CD8-positive, alpha-beta T cell (primary cell): ENCODE measurements at regions of chr1 and their contacts with region 1.

Region 1: GRCh38 chr1:13451399-13451965 is 41.2 kb downstream of the PRAMEF20 start:
- DNase-seq: no peak
- ATAC-seq: no peak
- H3K4me3 ChIP-seq: no peak overlapping the region
- H3K4me3 Mint-ChIP-seq: no peak overlapping the region
- H3K27ac ChIP-seq: no peak overlapping the region
- H3K27ac Mint-ChIP-seq: no peak overlapping the region
- H3K4me1 ChIP-seq: no peaks in the 10 kb centered on the region
- H3K4me1 Mint-ChIP-seq: no peaks in the 10 kb centered on the region
- H3K27me3 ChIP-seq: no peaks in the 10 kb centered on the region
- H3K27me3 Mint-ChIP-seq: peaks cover 9% of the 10 kb centered on the region
- CTCF ChIP-seq: no peak

Region 2: GRCh38 chr1:13461977-13462376 is 10.5 kb after region 1 on chr1:
- CTCF ChIA-PET with region 1: no interaction called
- POLR2A ChIA-PET with region 1: no interaction called
- intact Hi-C with region 1: loop called in 1 of 2 experiments (anchors 1 kb)
- DNase-seq: no peak
- ATAC-seq: no peak
- H3K4me3 ChIP-seq: no peak overlapping the region
- H3K4me3 Mint-ChIP-seq: no peak overlapping the region
- H3K27ac ChIP-seq: no peak overlapping the region
- H3K27ac Mint-ChIP-seq: no peak overlapping the region
- H3K4me1 ChIP-seq: no peaks in the 10 kb centered on the region
- H3K4me1 Mint-ChIP-seq: no peaks in the 10 kb centered on the region
- H3K27me3 ChIP-seq: no peaks in the 10 kb centered on the region
- H3K27me3 Mint-ChIP-seq: peaks cover 5% of the 10 kb centered on the region
- CTCF ChIP-seq: no peak